Ascending aorta (tissue), 2 donors: ENCODE measurements at regions of chr2 and their contacts with region 1.

Region 1: GRCh38 chr2:55232084-55232862 is at the starts of genes CLHC1 and RPS27A:
- DNase-seq: peak; percentile 50 to 92
- H3K4me3 ChIP-seq: peak within 1 kb of the TSS; percentile 69 to 86
- H3K27ac ChIP-seq: peak within 1 kb of the TSS; percentile 84 to 90
- H3K4me1 ChIP-seq: peaks cover 7 to 20% of the 10 kb centered on the region in 2 donors
- H3K27me3 ChIP-seq: no peaks in the 10 kb centered on the region
- CTCF ChIP-seq: no peak
- total RNA-seq, gene CLHC1: not detected
- total RNA-seq, gene RPS27A: 262 TPM

Region 2: DNA sequence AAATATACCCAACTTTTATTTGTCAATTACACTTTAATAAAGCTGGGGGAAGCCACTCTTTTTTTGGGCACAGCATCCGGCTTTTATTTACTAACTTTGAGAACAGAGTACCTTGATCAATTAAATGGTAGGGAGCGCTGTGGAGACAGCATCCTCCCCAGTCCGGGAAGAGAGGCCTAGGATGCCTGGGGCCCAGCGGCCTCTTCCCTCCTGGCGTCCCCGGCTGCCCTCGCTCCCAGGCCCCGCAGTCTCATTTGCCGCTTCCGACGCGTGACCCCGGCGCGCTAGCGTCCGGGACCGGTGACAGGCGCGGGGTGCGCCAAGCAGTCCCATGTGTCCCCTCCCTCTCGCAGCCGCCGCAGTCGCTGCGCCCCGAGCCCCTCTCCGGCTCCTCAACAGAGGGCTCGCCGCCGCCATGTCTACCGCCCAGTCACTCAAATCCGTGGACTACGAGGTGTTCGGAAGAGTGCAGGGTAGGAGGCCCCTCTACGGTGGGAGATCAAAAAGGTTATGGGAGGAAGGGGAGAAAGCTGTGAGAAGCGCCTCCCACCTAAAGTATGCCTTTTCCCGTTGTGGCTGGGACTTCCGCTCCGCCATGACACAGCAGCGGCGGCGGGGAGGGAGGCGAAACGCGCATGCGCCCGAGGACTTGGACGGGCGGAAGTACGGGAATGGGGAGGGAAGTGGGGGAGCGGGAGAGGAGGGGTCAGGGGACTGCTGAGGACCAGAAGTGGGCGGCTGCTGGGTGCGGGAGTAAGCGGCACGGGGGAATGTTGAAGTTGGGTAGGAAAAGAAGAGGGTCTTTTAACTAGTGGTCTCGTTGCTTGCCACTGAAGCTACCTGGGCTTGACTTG is 1116.8 kb before region 1 on chr2 and contains the start of gene ACYP2:
- intact Hi-C with region 1: loop called (anchors 10 kb)
- DNase-seq: peak; percentile 70 to 97
- H3K4me3 ChIP-seq: peak within 1 kb of the TSS; percentile 62 to 83
- H3K27ac ChIP-seq: peak within 1 kb of the TSS; percentile 98 to 99
- H3K4me1 ChIP-seq: no peaks in the 10 kb centered on the region
- H3K27me3 ChIP-seq: no peaks in the 10 kb centered on the region
- CTCF ChIP-seq: peak in 1 of 3 experiments; percentile 5
- total RNA-seq, gene ACYP2: 0.96 TPM

Region 3: GRCh38 chr2:55050133-55050994 is 181.9 kb before region 1 on chr2 and contains the start of gene RTN4:
- intact Hi-C with region 1: loop called (anchors 1 kb)
- DNase-seq: peak; percentile 98 to 99
- H3K4me3 ChIP-seq: peak within 1 kb of the TSS; percentile 79 to 90
- H3K27ac ChIP-seq: peak within 1 kb of the TSS; percentile 95 to 96
- H3K4me1 ChIP-seq: peaks cover 2 to 17% of the 10 kb centered on the region in 2 donors
- H3K27me3 ChIP-seq: no peaks in the 10 kb centered on the region
- CTCF ChIP-seq: no peak
- total RNA-seq, gene RTN4: 296 TPM

Region 4: GRCh38 chr2:55268907-55269644 is 36.8 kb after region 1 on chr2 and contains the start of gene MTIF2:
- intact Hi-C with region 1: loop called (anchors 1 kb)
- DNase-seq: peak; percentile 77 to 97
- H3K4me3 ChIP-seq: peak within 1 kb of the TSS; percentile 80 to 86
- H3K27ac ChIP-seq: peak within 1 kb of the TSS; percentile 80 to 83
- H3K4me1 ChIP-seq: peaks cover 0 to 4% of the 10 kb centered on the region in 2 donors
- H3K27me3 ChIP-seq: no peaks in the 10 kb centered on the region
- CTCF ChIP-seq: no peak
- total RNA-seq, gene MTIF2: 15.2 TPM

Region 5: DNA sequence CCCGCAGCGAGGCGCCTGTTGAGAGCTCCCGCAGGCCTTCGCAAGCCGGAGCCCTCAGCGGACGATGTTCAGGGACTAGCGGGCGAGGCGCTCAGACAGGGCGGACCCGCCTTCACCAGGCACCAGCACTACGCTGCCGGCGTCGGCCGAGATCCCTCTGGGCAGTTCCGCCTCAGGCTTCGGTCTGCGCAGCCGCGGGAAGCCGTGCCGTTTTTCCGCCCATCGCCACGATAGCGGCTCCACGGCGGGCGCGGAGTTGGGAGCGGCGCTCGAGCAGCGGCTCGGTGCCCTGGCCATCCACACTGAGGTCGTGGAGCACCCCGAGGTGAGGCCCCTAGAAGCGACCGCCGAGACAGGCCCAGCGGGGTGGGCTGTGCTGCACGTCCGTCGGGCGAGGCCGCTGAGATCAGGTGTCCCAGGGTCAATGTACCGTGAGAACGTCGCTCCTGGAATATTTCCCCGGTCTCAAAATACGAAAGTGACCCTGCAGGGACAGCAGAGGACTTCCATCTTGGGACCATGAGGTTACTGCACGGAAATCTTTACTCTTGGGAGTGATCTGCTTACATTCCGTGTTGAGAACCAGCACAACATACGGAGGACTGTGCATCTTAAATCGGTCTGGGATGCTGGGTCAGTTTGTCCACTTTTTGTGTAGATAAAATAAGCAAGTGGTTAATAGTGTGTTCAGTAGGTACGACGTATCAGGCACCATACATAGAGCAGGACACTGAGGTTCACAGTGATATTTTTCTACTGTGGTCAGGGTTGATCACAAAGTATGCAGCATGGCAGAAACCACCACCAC is 50.0 kb after region 1 on chr2:
- intact Hi-C with region 1: loop called (anchors 5 kb)
- DNase-seq: peak; percentile 43 to 92
- H3K4me3 ChIP-seq: peak overlapping the region; percentile 81 to 87
- H3K27ac ChIP-seq: peak overlapping the region; percentile 92
- H3K4me1 ChIP-seq: peaks cover 0 to 9% of the 10 kb centered on the region in 2 donors
- H3K27me3 ChIP-seq: no peaks in the 10 kb centered on the region
- CTCF ChIP-seq: no peak

Region 6: DNA sequence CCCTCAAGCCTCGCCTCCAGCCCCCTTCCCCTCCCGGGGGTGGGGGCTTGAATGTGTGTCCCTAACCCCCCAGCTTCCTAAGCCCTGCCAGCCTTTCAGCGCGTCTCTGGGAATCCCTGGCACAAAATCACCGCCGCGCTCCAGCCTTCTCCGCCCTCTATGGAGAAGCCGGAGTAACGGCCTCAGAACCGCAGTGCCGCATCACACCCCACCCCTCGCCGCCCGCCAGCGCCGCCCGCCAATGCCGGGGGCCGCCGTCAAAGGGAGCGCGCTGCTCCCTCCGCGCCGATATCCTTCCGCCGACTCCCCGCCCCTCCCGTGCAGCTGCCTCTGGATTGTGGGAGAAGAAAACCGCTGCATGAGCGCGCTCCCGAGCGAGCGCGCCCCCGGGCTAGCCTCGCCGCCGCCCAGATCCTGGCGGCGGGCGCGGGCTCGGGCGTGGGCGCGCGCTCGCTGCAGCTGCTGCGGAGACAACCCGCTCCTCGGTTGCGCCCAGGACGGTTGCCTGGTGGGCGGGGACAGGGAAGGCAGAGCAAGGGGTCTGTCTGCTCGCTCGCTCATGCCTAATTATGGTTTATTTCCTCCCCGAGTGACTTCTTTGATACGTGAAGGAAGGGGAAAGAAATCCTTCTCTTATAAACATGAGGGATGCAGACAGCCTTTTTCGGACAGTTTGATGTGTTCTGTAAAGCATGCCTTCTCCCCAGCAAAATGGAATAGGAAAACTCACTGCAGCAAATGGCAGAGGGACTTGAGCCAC is 187.6 kb after region 1 on chr2 and contains the start of gene CCDC88A:
- intact Hi-C with region 1: loop called (anchors 2 kb)
- DNase-seq: peak; percentile 84 to 97
- H3K4me3 ChIP-seq: peak within 1 kb of the TSS; percentile 83 to 92
- H3K27ac ChIP-seq: peak within 1 kb of the TSS; percentile 85 to 92
- H3K4me1 ChIP-seq: peaks cover 0 to 8% of the 10 kb centered on the region in 2 donors
- H3K27me3 ChIP-seq: no peaks in the 10 kb centered on the region
- CTCF ChIP-seq: peak; percentile 28 to 39 (median 29)
- total RNA-seq, gene CCDC88A: 39.2 TPM

Region 7: DNA sequence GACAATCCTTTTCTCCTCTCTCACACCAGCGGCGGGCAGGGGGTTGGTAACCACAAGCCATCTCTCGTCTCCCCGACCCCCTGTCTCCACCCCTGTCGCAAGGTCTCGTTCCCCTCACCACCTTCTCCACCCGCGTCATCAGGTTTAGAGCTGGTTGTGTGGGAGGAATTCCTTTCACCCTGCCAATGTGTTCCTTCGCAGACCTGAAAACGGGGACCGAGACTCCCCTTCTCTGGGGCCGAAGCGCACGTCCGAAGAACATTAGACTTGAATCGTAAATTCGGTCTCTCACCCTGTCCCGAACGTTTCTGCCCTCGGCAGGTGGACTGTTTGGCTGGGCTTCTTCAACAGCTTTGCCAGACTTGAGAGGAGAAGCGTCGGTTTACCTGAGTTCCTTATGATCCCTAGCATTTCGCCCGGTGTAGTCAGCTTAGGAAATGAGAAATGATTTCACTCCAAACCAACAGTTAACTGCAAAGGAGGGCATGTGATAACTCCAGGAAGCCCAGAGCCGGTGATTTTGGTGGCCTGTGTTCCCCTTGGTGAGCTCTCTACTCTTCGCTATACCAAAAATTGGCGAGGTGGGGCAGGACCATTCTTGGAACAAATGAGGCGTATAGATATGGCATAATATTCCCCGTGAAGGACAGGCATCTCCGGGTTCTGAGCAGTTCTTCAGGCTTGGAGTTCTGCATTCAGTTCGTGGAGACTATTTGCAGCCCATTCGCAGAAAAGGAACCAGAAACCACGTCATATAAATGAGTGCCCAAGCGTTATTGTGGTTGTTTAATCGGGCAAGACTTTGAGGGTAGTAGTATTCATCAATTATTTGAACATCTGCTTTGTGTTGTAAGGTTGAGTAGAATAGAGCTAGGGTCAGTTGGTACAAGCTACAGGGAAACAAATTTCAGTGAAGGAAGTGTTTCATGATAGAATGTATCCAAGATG is 287.9 kb after region 1 on chr2:
- intact Hi-C with region 1: loop called (anchors 2 kb)
- DNase-seq: peak in 1 of 2 donors; percentile 68
- H3K4me3 ChIP-seq: peak overlapping the region; percentile 60 to 93
- H3K27ac ChIP-seq: peak overlapping the region; percentile 83 to 84
- H3K4me1 ChIP-seq: peaks cover 3% of the 10 kb centered on the region in 2 donors
- H3K27me3 ChIP-seq: no peaks in the 10 kb centered on the region
- CTCF ChIP-seq: no peak